ENCODE measurements at regions of chr1 and their contacts with region 1.

Region 1: DNA sequence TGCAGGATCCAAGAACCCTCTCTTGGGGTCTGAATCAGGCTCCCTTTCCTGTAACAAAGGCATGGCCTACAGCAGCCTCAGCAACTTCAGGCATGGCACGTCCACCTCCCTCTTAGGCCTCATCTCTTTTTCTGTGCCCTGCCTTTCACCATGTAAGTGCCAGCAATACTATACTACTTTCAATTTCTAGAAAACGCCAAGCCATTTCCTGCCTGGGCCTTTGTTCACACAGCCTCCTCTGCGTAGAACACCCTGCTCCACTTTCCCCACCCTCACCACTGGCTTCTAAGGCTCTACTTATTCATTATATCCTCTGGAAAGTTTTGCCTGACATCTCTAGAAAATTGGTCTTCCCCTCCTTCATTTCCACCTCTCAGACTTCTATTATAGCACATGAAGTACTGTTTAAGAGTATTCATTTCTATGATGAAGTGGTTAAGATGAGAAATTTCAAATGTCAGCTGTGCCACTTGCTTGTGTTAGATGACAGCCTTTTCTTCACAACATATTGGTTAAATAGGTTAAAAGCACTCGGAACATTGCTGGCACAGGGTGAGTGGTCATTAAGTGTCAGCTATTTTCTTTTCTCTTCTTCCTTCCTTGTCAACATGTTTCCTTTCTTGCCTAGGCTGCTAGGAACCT is 41.6 kb upstream of the VWA5B1 start:
- DNase-seq: peak; percentile 10
- H3K4me3 Mint-ChIP-seq: no peak overlapping the region
- H3K27ac Mint-ChIP-seq: peak overlapping the region; percentile 44
- H3K4me1 Mint-ChIP-seq: peaks cover 10% of the 10 kb centered on the region
- H3K27me3 Mint-ChIP-seq: peaks cover 7% of the 10 kb centered on the region

Region 2: GRCh38 chr1:20017741-20018140 is 231.4 kb before region 1 on chr1:
- intact Hi-C with region 1: no loop called
- DNase-seq: no peak
- H3K4me3 Mint-ChIP-seq: no peak overlapping the region
- H3K27ac Mint-ChIP-seq: no peak overlapping the region
- H3K4me1 Mint-ChIP-seq: no peaks in the 10 kb centered on the region
- H3K27me3 Mint-ChIP-seq: peaks cover 22% of the 10 kb centered on the region

Region 3: GRCh38 chr1:20322081-20322824 is 73.2 kb after region 1 on chr1:
- intact Hi-C with region 1: loop called (anchors 10 kb)
- DNase-seq: peak; percentile 15
- H3K4me3 Mint-ChIP-seq: peak overlapping the region; percentile 13
- H3K27ac Mint-ChIP-seq: peak overlapping the region; percentile 26
- H3K4me1 Mint-ChIP-seq: peaks cover 27% of the 10 kb centered on the region
- H3K27me3 Mint-ChIP-seq: peaks cover 41% of the 10 kb centered on the region

Region 4: DNA sequence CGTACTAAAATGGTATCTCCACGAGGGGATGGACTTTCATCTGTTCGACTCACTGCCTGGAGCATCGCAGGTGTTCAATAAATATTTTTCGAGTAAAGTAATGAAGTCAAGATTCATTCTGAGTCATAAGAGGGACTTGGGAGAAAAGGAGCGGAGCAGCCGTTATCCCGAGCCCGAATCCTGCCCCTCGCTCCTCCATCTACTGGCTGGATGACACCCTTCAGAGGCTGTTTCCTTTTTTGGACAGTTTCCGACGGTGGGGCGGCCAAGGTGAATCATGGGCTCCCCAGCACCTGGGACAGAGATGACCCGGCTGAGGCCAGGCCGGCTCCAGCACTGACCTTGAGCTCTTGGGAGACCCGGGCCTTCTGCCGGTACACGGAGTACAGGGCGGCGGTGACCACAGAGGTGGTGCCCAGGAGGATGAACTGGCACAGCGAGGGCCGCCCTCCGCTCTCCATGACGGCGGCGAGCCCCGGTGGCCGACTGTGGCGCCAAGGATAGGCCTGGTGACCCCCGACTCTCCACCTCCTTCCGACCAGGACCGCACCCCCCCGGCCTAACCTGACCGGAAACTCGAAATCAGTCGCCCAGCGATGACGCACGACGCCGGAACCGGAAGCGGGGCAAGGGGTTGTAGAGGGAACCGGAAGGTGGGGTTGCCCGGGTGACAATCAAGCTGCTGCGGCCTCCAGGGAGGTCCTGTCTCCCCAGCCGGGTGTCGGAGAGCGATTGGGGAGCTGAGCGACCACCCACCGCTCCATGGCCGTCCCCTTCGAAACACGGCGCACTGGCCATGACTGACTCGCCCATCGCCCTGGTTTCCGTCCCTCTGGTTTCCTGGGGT is 258.7 kb after region 1 on chr1 and contains the start of gene MUL1:
- intact Hi-C with region 1: no loop called
- DNase-seq: peak; percentile 90
- H3K4me3 Mint-ChIP-seq: peak within 1 kb of the TSS; percentile 82
- H3K27ac Mint-ChIP-seq: peak within 1 kb of the TSS; percentile 80
- H3K4me1 Mint-ChIP-seq: peaks cover 4% of the 10 kb centered on the region
- H3K27me3 Mint-ChIP-seq: peaks cover 3% of the 10 kb centered on the region
- total RNA-seq, gene MUL1: 17.1 and 17.4 TPM in 2 replicates